ENCODE measurements at regions of chr1 and their contacts with region 1.

Region 1: DNA sequence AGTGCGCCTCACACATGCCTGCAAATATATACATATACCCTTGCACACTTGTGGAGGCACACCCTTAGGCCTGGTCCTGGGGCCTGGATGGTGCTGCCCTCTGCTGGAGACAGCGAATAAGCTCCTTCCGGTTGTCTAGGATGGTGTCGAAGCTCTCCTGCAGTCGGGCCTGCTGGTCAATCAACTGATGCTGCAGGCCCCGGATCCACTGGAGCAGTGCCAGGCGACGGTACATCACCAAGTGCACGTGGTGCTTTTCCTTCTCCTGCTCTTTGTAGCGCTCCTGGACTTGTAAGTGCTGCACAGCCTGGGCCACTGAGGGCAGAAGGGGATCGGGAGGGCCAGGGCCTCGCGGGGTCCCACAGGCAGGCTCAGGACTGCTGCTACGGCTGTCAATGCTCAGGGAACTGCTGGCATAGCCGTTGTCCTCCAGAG is 3.1 kb downstream of the C1orf216 start:
- DNase-seq: peak; percentile 61 to 85 (median 66)
- H3K4me3 ChIP-seq: no peak overlapping the region
- H3K4me3 Mint-ChIP-seq: peak overlapping the region in 6 of 7 donors; percentile 24 to 76 (median 68)
- H3K27ac ChIP-seq: no peak overlapping the region
- H3K27ac Mint-ChIP-seq: peak overlapping the region in 6 of 8 donors; percentile 43 to 88 (median 64)
- H3K4me1 ChIP-seq: peaks cover 23% of the 10 kb centered on the region
- H3K4me1 Mint-ChIP-seq: peaks cover 31 to 41% (median 41%) of the 10 kb centered on the region in 3 donors
- H3K27me3 ChIP-seq: no peaks in the 10 kb centered on the region
- H3K27me3 Mint-ChIP-seq: no peaks in the 10 kb centered on the region

Region 2: GRCh38 chr1:35564037-35564883 is 151.3 kb before region 1 on chr1:
- CTCF ChIA-PET with region 1: interaction called, 25 read pairs
- POLR2A ChIA-PET with region 1: interaction called, 3 read pairs
- DNase-seq: peak; percentile 58 to 84 (median 70)
- H3K4me3 ChIP-seq: no peak overlapping the region
- H3K4me3 Mint-ChIP-seq: peak overlapping the region in 1 of 7 donors; percentile 29
- H3K27ac ChIP-seq: no peak overlapping the region
- H3K27ac Mint-ChIP-seq: peak overlapping the region in 7 of 8 donors; percentile 16 to 82 (median 58)
- H3K4me1 ChIP-seq: peaks cover 2% of the 10 kb centered on the region
- H3K4me1 Mint-ChIP-seq: peaks cover 17 to 43% (median 34%) of the 10 kb centered on the region in 3 donors
- H3K27me3 ChIP-seq: no peaks in the 10 kb centered on the region
- H3K27me3 Mint-ChIP-seq: no peaks in the 10 kb centered on the region

Region 3: DNA sequence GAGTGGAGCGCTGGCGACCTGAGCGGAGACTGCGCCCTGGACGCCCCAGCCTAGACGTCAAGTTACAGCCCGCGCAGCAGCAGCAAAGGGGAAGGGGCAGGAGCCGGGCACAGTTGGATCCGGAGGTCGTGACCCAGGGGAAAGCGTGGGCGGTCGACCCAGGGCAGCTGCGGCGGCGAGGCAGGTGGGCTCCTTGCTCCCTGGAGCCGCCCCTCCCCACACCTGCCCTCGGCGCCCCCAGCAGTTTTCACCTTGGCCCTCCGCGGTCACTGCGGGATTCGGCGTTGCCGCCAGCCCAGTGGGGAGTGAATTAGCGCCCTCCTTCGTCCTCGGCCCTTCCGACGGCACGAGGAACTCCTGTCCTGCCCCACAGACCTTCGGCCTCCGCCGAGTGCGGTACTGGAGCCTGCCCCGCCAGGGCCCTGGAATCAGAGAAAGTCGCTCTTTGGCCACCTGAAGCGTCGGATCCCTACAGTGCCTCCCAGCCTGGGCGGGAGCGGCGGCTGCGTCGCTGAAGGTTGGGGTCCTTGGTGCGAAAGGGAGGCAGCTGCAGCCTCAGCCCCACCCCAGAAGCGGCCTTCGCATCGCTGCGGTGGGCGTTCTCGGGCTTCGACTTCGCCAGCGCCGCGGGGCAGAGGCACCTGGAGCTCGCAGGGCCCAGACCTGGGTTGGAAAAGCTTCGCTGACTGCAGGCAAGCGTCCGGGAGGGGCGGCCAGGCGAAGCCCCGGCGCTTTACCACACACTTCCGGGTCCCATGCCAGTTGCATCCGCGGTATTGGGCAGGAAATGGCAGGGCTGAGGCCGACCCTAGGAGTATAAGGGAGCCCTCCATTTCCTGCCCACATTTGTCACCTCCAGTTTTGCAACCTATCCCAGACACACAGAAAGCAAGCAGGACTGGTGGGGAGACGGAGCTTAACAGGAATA is 138.2 kb before region 1 on chr1:
- CTCF ChIA-PET with region 1: interaction called, 15 read pairs
- POLR2A ChIA-PET with region 1: no interaction called
- DNase-seq: peak; percentile 47 to 84 (median 66)
- H3K4me3 ChIP-seq: peak overlapping the region; percentile 81
- H3K4me3 Mint-ChIP-seq: peak overlapping the region; percentile 69 to 96 (median 93)
- H3K27ac ChIP-seq: peak overlapping the region; percentile 1
- H3K27ac Mint-ChIP-seq: peak overlapping the region; percentile 15 to 97 (median 94)
- H3K4me1 ChIP-seq: peaks cover 20% of the 10 kb centered on the region
- H3K4me1 Mint-ChIP-seq: peaks cover 25 to 37% (median 28%) of the 10 kb centered on the region in 3 donors
- H3K27me3 ChIP-seq: no peaks in the 10 kb centered on the region
- H3K27me3 Mint-ChIP-seq: peaks cover 0 to 2% of the 10 kb centered on the region in 2 donors

Region 4: GRCh38 chr1:35702508-35702907 is 13.1 kb before region 1 on chr1:
- CTCF ChIA-PET with region 1: interaction called, 13 read pairs
- POLR2A ChIA-PET with region 1: no interaction called
- DNase-seq: no peak
- H3K4me3 ChIP-seq: no peak overlapping the region
- H3K4me3 Mint-ChIP-seq: no peak overlapping the region
- H3K27ac ChIP-seq: no peak overlapping the region
- H3K27ac Mint-ChIP-seq: no peak overlapping the region
- H3K4me1 ChIP-seq: peaks cover 7% of the 10 kb centered on the region
- H3K4me1 Mint-ChIP-seq: peaks cover 8 to 9% (median 8%) of the 10 kb centered on the region in 3 donors
- H3K27me3 ChIP-seq: peaks cover 20% of the 10 kb centered on the region
- H3K27me3 Mint-ChIP-seq: peaks cover 44 to 57% of the 10 kb centered on the region in 2 donors

Region 5: GRCh38 chr1:35726450-35727433 is 11.2 kb after region 1 on chr1:
- CTCF ChIA-PET with region 1: interaction called, 88 read pairs
- POLR2A ChIA-PET with region 1: no interaction called
- DNase-seq: peak; percentile 21 to 71 (median 40)
- H3K4me3 ChIP-seq: no peak overlapping the region
- H3K4me3 Mint-ChIP-seq: peak overlapping the region in 1 of 7 donors; percentile 24
- H3K27ac ChIP-seq: no peak overlapping the region
- H3K27ac Mint-ChIP-seq: peak overlapping the region in 4 of 8 donors; percentile 4 to 47 (median 30)
- H3K4me1 ChIP-seq: no peaks in the 10 kb centered on the region
- H3K4me1 Mint-ChIP-seq: peaks cover 0 to 6% (median 5%) of the 10 kb centered on the region in 3 donors
- H3K27me3 ChIP-seq: no peaks in the 10 kb centered on the region
- H3K27me3 Mint-ChIP-seq: no peaks in the 10 kb centered on the region

Region 6: GRCh38 chr1:35769188-35769758 is 53.7 kb after region 1 on chr1:
- CTCF ChIA-PET with region 1: interaction called, 12 read pairs
- POLR2A ChIA-PET with region 1: no interaction called
- DNase-seq: peak; percentile 76 to 88 (median 80)
- H3K4me3 ChIP-seq: peak overlapping the region; percentile 87
- H3K4me3 Mint-ChIP-seq: peak overlapping the region; percentile 84 to 97 (median 94)
- H3K27ac ChIP-seq: peak overlapping the region; percentile 81
- H3K27ac Mint-ChIP-seq: peak overlapping the region; percentile 47 to 98 (median 80)
- H3K4me1 ChIP-seq: peaks cover 6% of the 10 kb centered on the region
- H3K4me1 Mint-ChIP-seq: peaks cover 7 to 17% (median 13%) of the 10 kb centered on the region in 3 donors
- H3K27me3 ChIP-seq: no peaks in the 10 kb centered on the region
- H3K27me3 Mint-ChIP-seq: no peaks in the 10 kb centered on the region

Region 7: GRCh38 chr1:35777109-35777508 is 61.5 kb after region 1 on chr1:
- CTCF ChIA-PET with region 1: interaction called, 11 read pairs
- POLR2A ChIA-PET with region 1: no interaction called
- DNase-seq: no peak
- H3K4me3 ChIP-seq: no peak overlapping the region
- H3K4me3 Mint-ChIP-seq: peak overlapping the region in 3 of 7 donors; percentile 9 to 30 (median 22)
- H3K27ac ChIP-seq: no peak overlapping the region
- H3K27ac Mint-ChIP-seq: peak overlapping the region; percentile 2 to 90 (median 50)
- H3K4me1 ChIP-seq: no peaks in the 10 kb centered on the region
- H3K4me1 Mint-ChIP-seq: peaks cover 17 to 34% (median 23%) of the 10 kb centered on the region in 3 donors
- H3K27me3 ChIP-seq: no peaks in the 10 kb centered on the region
- H3K27me3 Mint-ChIP-seq: no peaks in the 10 kb centered on the region